Naive thymus-derived CD4-positive, alpha-beta T cell (primary cell): ENCODE measurements at regions of chr1 and their contacts with region 1.

Region 1: GRCh38 chr1:101128211-101128727 is 102.7 kb upstream of the DPH5 start:
- DNase-seq: peak in 7 of 9 donors; percentile 38 to 72 (median 60)
- ATAC-seq: peak; percentile 79
- H3K4me3 ChIP-seq: no peak overlapping the region
- H3K4me3 Mint-ChIP-seq: peak overlapping the region; percentile 17 to 80 (median 72)
- H3K27ac ChIP-seq: peak overlapping the region; percentile 64
- H3K27ac Mint-ChIP-seq: peak overlapping the region; percentile 85 to 96 (median 91)
- H3K4me1 ChIP-seq: peaks cover 26 to 49% of the 10 kb centered on the region in 2 donors
- H3K4me1 Mint-ChIP-seq: peaks cover 42 to 83% (median 66%) of the 10 kb centered on the region in 7 donors
- H3K27me3 ChIP-seq: no peaks in the 10 kb centered on the region
- H3K27me3 Mint-ChIP-seq: no peaks in the 10 kb centered on the region

Region 2: GRCh38 chr1:101145449-101145820 is 17.2 kb after region 1 on chr1:
- CTCF ChIA-PET with region 1: interaction called, 4 read pairs
- POLR2A ChIA-PET with region 1: interaction called, 5 read pairs
- intact Hi-C with region 1: loop called in 1 of 2 experiments (anchors 1 kb)
- DNase-seq: no peak
- ATAC-seq: no peak
- H3K4me3 ChIP-seq: no peak overlapping the region
- H3K4me3 Mint-ChIP-seq: no peak overlapping the region
- H3K27ac ChIP-seq: no peak overlapping the region
- H3K27ac Mint-ChIP-seq: peak overlapping the region in 2 of 9 donors; percentile 31 to 34
- H3K4me1 ChIP-seq: no peaks in the 10 kb centered on the region
- H3K4me1 Mint-ChIP-seq: peaks cover 0 to 18% (median 5%) of the 10 kb centered on the region in 7 donors
- H3K27me3 ChIP-seq: no peaks in the 10 kb centered on the region
- H3K27me3 Mint-ChIP-seq: no peaks in the 10 kb centered on the region